Right cardiac atrium (tissue), 5 donors: ENCODE measurements at regions of chr12 and their contacts with region 1.

Region 1: GRCh38 chr12:122946690-122947341 is 19.4 kb downstream of the ABCB9 start:
- DNase-seq: peak; percentile 84 to 89 (median 85)
- ATAC-seq: peak; percentile 73 to 87
- H3K4me3 ChIP-seq: no peak overlapping the region
- H3K27ac ChIP-seq: peak overlapping the region; percentile 46
- H3K4me1 ChIP-seq: peaks cover 5% of the 10 kb centered on the region
- H3K27me3 ChIP-seq: no peaks in the 10 kb centered on the region

Region 2: DNA sequence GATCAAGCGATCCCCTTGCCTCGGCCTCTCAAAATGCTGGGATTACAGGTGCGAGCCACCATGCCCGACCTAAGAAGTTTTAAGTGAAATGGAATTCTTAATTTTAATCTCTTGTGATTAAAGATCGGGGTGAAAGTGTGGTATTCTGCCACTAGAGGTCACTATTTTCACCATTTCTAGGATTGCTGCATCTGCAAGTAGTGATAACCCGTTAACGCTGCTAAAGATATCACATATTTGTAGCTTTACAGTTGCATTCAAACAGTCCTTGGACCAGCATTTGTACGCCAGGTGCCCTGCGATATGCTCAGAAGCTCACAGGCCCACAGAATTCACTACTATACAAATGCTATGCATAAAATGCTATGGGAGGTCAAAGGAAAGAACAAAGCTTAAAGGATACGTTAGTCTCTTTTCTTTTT is 153.1 kb before region 1 on chr12:
- intact Hi-C with region 1: loop called (anchors 5 to 10 kb)
- DNase-seq: no peak
- ATAC-seq: peak; percentile 33 to 55
- H3K4me3 ChIP-seq: no peak overlapping the region
- H3K27ac ChIP-seq: no peak overlapping the region
- H3K4me1 ChIP-seq: no peaks in the 10 kb centered on the region
- H3K27me3 ChIP-seq: no peaks in the 10 kb centered on the region

Region 3: DNA sequence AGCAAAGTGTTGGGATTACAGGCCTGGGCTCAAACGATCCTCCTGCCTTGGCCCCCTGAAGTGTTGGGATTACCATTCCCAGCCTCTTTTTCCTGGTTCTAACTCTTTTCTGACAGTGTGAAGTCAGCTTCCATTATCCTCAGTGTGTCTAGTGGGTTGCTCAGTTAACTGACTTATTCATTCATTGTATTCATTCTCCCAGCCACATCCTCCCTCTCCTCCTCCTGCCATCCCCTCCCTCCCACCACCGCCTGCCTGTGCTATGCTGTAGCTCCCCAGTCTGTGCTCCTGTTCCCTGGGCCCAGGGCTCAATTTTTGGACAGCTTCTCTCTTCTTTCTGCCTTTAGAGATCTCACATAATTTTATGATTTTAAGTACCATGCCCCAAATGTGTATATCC is 784.8 kb after region 1 on chr12:
- intact Hi-C with region 1: no loop called
- DNase-seq: no peak
- ATAC-seq: no peak
- H3K4me3 ChIP-seq: no peak overlapping the region
- H3K27ac ChIP-seq: no peak overlapping the region
- H3K4me1 ChIP-seq: no peaks in the 10 kb centered on the region
- H3K27me3 ChIP-seq: no peaks in the 10 kb centered on the region